ENCODE measurements at regions of chr3 and their contacts with region 1.

Region 1: DNA sequence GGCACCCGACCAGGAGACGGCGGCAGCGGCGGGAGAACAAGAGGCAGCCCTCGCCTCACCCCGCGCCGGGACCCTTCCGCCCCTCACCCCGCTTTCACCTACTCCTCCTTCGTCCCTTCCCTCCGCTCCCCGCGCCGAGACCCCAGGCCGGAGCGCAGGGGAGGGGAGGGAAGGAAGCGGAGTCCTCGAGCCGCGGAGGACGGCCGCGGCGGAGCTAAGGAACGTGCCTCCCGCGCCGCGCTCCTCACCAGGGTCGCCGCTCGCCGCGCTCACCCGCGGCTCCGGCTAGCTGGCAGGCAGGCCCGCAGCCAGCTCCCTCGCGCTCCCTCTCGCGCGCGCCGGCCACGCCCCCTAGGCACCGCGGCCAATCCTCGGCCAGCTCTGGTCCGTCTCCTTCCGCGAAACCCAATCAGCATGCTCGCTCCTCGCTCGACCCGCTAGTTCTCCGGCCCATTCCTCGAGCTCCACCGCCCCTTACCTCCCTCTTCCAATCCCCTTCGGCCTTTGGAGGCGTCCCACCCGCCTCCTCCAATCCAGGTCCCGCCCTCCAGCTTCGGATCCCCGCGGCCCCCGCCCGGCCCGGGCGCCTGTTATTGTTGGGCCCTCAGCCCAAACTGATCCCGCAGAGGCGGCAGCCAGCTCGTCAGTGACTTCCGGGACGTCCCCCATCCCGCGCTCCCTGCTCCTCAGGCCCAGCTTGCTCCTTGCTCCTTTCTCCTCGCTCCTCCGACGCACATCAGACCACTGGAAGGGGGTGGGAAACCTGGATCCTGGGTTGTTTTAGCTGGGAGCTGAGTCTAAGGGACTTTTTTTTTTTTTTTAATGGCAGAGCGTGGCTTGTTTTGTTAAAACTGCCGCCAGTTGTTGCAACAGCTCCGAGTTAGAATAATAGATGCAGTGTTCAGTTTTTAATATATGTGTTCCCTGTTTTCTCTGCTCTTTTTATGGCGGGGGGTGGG is at the start of gene DCBLD2:
- DNase-seq: peak; percentile 99
- ATAC-seq: peak; percentile 90
- H3K4me3 ChIP-seq: peak within 1 kb of the TSS; percentile 90
- H3K27ac ChIP-seq: peak within 1 kb of the TSS; percentile 80
- H3K4me1 ChIP-seq: peaks cover 46% of the 10 kb centered on the region
- H3K27me3 ChIP-seq: no peaks in the 10 kb centered on the region
- CTCF ChIP-seq: no peak
- total RNA-seq, gene DCBLD2: 265 and 307 TPM in 2 replicates

Region 2: DNA sequence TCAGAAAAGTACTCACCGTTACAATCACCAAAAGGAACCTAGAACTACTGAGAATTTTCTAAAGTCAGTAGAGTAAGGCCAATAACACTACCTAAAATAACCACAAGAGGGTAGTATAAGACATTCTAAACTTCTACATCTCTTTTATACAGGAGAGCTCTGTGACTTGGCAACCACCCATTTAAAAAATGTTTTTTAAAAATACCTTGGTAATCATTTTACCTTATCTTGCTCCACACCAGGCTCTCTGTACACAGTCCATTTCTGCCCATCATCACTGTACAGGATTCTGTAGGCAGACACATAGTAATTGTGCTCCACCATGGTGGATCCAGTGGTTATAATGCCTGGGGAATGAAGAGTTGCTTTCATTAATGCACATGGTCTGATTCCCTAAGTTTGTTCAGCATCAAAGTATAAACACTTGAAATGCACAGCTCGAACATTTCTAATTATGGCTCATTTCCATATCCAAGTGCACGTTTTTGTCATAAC is 84.1 kb before region 1 on chr3:
- CTCF ChIA-PET with region 1: no interaction called
- POLR2A ChIA-PET with region 1: no interaction called
- intact Hi-C with region 1: loop called (anchors 2 kb)
- DNase-seq: peak; percentile 89
- ATAC-seq: peak; percentile 42
- H3K4me3 ChIP-seq: no peak overlapping the region
- H3K27ac ChIP-seq: peak overlapping the region; percentile 21
- H3K4me1 ChIP-seq: peaks cover 31% of the 10 kb centered on the region
- H3K27me3 ChIP-seq: no peaks in the 10 kb centered on the region
- CTCF ChIP-seq: peak; percentile 84

Region 3: GRCh38 chr3:98918586-98918985 is 16.9 kb after region 1 on chr3:
- CTCF ChIA-PET with region 1: interaction called, 4 read pairs
- POLR2A ChIA-PET with region 1: interaction called, 13 read pairs
- intact Hi-C with region 1: loop called (anchors 1 kb)
- DNase-seq: peak; percentile 45
- ATAC-seq: no peak
- H3K4me3 ChIP-seq: no peak overlapping the region
- H3K27ac ChIP-seq: no peak overlapping the region
- H3K4me1 ChIP-seq: peaks cover 53% of the 10 kb centered on the region
- H3K27me3 ChIP-seq: no peaks in the 10 kb centered on the region
- CTCF ChIP-seq: no peak

Region 4: DNA sequence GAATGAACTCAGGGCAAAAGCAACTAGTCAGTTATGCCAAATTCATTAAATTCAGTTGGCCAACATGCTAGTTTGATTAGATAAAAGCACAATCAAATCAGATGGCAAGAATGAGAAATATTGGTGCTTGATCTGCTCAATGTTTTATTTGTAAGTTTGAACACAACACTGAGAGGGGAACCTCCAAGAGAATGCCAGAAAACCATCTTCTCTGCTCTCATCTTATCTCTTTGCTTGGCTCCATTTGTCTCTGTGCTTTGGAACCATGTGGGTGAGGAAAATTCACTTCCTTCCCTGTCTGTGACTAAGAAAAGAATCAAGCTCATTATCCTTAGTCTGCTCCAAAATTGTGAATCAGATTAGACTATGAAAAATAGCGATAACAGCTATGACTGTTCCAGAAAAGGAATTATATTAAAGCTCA is 43.4 kb after region 1 on chr3:
- CTCF ChIA-PET with region 1: no interaction called
- POLR2A ChIA-PET with region 1: interaction called, 13 read pairs
- intact Hi-C with region 1: no loop called
- DNase-seq: peak; percentile 31
- ATAC-seq: peak; percentile 29; the same call in 1 of the 2 replicates
- H3K4me3 ChIP-seq: no peak overlapping the region
- H3K27ac ChIP-seq: no peak overlapping the region
- H3K4me1 ChIP-seq: peaks cover 9% of the 10 kb centered on the region; the same call in 1 of the 2 replicates
- H3K27me3 ChIP-seq: no peaks in the 10 kb centered on the region
- CTCF ChIP-seq: no peak

Region 5: DNA sequence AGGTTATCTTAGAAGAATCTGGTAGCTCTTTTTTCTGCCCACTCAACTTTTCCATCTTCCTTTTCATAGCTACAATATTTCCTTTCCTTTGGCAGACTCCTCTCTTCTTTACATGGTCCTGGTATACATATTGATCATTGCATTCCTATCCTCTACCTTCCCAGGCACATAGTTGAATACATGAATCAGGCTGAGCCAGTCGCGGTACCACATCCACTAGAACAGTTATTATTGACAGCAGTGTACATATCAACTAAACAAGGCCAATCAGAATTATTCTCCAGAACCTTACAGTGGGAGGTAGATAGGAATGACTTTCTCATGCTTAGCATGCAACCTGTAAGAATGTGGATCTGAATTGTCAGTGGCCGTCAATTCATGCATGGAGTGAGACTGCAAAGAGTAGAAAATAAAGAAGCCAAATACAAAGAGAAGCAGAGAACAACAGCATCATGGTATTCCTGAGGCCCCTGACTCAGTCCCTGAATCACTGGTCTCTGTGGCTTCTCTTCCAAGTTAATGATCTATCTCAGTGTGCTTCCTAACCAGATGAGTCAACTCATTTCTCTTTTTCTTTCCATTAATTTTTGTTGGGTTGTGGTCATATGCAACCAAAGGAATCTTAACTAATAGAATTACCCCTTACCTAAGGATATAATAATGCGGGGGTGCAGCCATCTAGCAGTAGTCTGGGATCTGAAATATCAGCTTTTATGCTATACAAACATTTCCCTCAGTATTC is 60.7 kb after region 1 on chr3:
- CTCF ChIA-PET with region 1: no interaction called
- POLR2A ChIA-PET with region 1: interaction called, 27 read pairs
- intact Hi-C with region 1: loop called (anchors 2 kb)
- DNase-seq: peak; percentile 97
- ATAC-seq: peak; percentile 72
- H3K4me3 ChIP-seq: peak overlapping the region; percentile 64
- H3K27ac ChIP-seq: peak overlapping the region; percentile 97
- H3K4me1 ChIP-seq: peaks cover 78% of the 10 kb centered on the region
- H3K27me3 ChIP-seq: no peaks in the 10 kb centered on the region
- CTCF ChIP-seq: no peak

Region 6: DNA sequence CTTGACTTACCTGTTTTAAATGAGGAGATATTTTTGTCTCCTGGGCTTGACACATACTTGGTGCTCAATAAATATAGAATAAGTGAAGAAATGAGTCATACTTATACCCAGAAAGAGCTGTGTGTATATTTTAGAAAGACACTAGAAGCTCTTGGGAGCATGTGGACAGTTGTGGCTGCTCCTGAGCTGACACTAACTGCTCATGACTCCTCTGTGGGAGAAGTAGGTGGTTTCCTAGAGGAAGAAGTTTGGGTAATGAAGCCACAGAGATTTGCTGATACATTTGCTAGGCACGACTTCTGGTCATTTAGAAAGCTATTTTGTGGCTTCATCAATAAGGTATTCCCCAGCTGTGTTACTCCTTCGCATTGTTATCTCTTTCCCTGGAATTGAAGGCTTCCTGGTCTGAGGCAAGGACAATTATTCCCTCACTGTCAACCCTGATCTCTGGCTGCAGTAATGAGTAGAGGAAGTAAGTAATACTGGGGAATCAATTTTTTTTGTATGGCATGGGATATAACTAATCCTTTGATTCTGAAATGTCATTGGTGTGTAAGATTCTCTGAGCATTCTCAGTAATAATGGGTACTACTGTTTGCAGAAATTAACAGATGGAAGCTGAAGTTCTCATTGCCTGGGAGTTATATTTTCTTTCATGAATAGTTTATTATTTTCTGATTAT is 79.4 kb after region 1 on chr3:
- CTCF ChIA-PET with region 1: interaction called, 4 read pairs
- POLR2A ChIA-PET with region 1: interaction called, 33 read pairs
- intact Hi-C with region 1: loop called (anchors 1 kb)
- DNase-seq: peak; percentile 77
- ATAC-seq: peak; percentile 22; the same call in 1 of the 2 replicates
- H3K4me3 ChIP-seq: peak overlapping the region; percentile 62
- H3K27ac ChIP-seq: peak overlapping the region; percentile 98
- H3K4me1 ChIP-seq: peaks cover 87% of the 10 kb centered on the region
- H3K27me3 ChIP-seq: no peaks in the 10 kb centered on the region
- CTCF ChIP-seq: no peak

Measured in PC-3 (cell line).